ENCODE measurements at regions of chr2 and their contacts with region 1.

Region 1: GRCh38 chr2:68751397-68752339 is 17.1 kb downstream of the ARHGAP25 start:
- DNase-seq: peak; percentile 93
- H3K4me3 Mint-ChIP-seq: peak overlapping the region; percentile 11
- H3K27ac Mint-ChIP-seq: peak overlapping the region; percentile 77
- H3K4me1 Mint-ChIP-seq: peaks cover 92% of the 10 kb centered on the region
- H3K27me3 Mint-ChIP-seq: no peaks in the 10 kb centered on the region

Region 2: GRCh38 chr2:68721482-68722101 is 30.1 kb before region 1 on chr2:
- CTCF ChIA-PET with region 1: interaction called, 40 read pairs
- POLR2A ChIA-PET with region 1: interaction called, 491 read pairs
- DNase-seq: peak; percentile 67
- H3K4me3 Mint-ChIP-seq: peak overlapping the region; percentile 58
- H3K27ac Mint-ChIP-seq: peak overlapping the region; percentile 95
- H3K4me1 Mint-ChIP-seq: peaks cover 99% of the 10 kb centered on the region
- H3K27me3 Mint-ChIP-seq: no peaks in the 10 kb centered on the region

Region 3: GRCh38 chr2:68734688-68735525 is 16.8 kb before region 1 on chr2 and contains the start of gene ARHGAP25:
- CTCF ChIA-PET with region 1: interaction called, 89 read pairs
- POLR2A ChIA-PET with region 1: interaction called, 491 read pairs
- DNase-seq: peak; percentile 68
- H3K4me3 Mint-ChIP-seq: no peak within 1 kb of the TSS
- H3K27ac Mint-ChIP-seq: no peak within 1 kb of the TSS
- H3K4me1 Mint-ChIP-seq: peaks cover 34% of the 10 kb centered on the region
- H3K27me3 Mint-ChIP-seq: no peaks in the 10 kb centered on the region
- total RNA-seq, gene ARHGAP25: 128 to 132 TPM

Region 4: GRCh38 chr2:68774569-68775271 is 23.1 kb after region 1 on chr2:
- CTCF ChIA-PET with region 1: interaction called, 92 read pairs
- POLR2A ChIA-PET with region 1: interaction called, 356 read pairs
- DNase-seq: peak; percentile 77
- H3K4me3 Mint-ChIP-seq: peak overlapping the region; percentile 80
- H3K27ac Mint-ChIP-seq: peak overlapping the region; percentile 97
- H3K4me1 Mint-ChIP-seq: peaks cover 87% of the 10 kb centered on the region
- H3K27me3 Mint-ChIP-seq: no peaks in the 10 kb centered on the region

Region 5: GRCh38 chr2:68807821-68808266 is 56.2 kb after region 1 on chr2:
- CTCF ChIA-PET with region 1: interaction called, 10 read pairs
- POLR2A ChIA-PET with region 1: interaction called, 5 read pairs
- DNase-seq: no peak
- H3K4me3 Mint-ChIP-seq: no peak overlapping the region
- H3K27ac Mint-ChIP-seq: peak overlapping the region; percentile 54
- H3K4me1 Mint-ChIP-seq: peaks cover 33% of the 10 kb centered on the region
- H3K27me3 Mint-ChIP-seq: no peaks in the 10 kb centered on the region

Region 6: GRCh38 chr2:68909793-68910674 is 158.4 kb after region 1 on chr2:
- CTCF ChIA-PET with region 1: interaction called, 25 read pairs
- POLR2A ChIA-PET with region 1: interaction called, 9 read pairs
- DNase-seq: peak; percentile 80
- H3K4me3 Mint-ChIP-seq: no peak overlapping the region
- H3K27ac Mint-ChIP-seq: peak overlapping the region; percentile 69
- H3K4me1 Mint-ChIP-seq: peaks cover 43% of the 10 kb centered on the region
- H3K27me3 Mint-ChIP-seq: no peaks in the 10 kb centered on the region

Measured in activated CD4-positive, alpha-beta memory T cell treated with anti-CD3 and anti-CD28 coated beads, Interleukin-2, amount 10 ng/mL, durations not matched to agents 7 days and 5 days (primary cell).